Tibial artery (tissue), 4 donors: ENCODE measurements at regions of chr9 and their contacts with region 1.

Region 1: DNA sequence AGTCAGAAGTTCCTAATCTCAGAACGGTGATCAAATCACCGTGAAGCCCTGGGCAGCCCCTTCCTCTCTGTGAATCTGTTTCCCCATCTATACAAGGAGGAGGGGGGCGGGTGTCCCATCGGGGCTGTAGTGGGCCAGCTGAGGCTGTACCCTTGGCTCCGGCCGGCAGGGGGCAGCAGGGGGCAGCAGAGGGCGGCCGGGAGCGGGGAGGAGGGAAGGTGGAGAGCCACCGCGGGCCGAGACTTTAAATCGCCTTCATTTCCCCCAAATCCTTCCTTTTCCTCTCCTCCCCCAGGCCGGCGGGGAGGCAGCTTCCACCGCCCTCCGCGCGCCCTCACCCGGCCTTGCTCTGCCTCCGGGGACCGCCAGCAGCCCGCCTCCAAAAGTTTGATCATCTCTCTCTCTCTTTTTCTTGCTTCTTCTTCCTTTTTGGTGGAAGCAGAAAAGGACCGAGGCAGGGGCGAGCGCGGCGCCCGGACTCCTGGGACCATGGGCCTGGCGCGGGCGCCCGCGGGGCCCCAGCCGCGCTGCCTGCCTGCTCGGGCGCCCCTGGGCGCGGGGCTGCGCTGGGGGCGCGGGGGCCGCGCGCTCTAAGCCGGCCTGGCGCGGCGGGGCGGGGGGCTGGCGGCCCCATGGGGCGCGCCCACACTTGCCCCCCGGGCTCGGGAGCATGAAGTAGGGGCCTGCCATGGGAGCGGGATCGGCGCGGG is at the start of gene COL27A1:
- DNase-seq: peak; percentile 81 to 88
- H3K4me3 ChIP-seq: peak within 1 kb of the TSS; percentile 57 to 72
- H3K27ac ChIP-seq: peak within 1 kb of the TSS; percentile 79 to 88
- H3K4me1 ChIP-seq: peaks cover 0 to 42% (median 33%) of the 10 kb centered on the region in 4 donors
- H3K27me3 ChIP-seq: peaks cover 0 to 32% of the 10 kb centered on the region in 2 donors
- CTCF ChIP-seq: peak; percentile 96 to 98

Region 2: DNA sequence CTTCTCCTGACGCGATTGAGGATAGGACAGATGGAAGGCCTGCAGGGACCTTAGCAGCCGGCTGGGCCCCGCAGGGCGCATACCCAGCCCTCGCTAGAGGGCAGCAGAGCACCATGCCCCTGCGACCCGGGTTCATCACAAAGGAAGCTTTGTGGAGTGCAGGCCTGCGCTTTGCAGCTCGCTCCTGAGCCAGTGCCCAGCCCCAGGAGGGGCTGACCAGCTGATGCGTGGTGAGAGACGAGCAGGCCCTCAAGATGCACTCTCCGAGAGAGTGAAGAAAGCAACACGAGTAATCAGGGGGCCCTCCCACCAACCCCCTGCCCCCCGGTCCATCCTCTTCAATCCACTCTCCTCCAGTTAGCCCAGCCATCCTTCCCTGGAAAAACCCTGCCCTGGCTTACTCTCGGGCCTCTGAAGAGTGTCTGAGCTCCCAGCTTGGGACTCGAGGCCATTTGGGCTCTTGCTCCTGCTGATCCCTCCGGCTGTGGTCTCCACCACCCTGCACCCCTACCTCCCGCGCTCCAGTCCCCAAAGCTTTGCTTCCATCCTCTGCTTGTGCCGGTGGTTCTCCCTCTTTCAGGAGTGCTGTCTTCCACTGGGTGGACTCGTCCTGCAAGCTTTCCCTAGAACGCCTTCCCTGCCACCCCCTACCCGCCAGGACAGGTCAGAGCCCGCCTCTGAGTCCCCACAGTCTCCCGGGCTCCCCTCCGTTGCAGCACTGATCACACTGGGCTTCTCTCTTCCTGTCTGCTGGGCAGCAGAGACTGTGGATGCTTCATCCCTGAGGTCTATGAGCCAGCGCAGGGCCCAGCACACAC is 47.2 kb before region 1 on chr9:
- intact Hi-C with region 1: loop called (anchors 5 kb)
- DNase-seq: peak; percentile 57 to 81
- H3K4me3 ChIP-seq: no peak overlapping the region
- H3K27ac ChIP-seq: no peak overlapping the region
- H3K4me1 ChIP-seq: peaks cover 0 to 12% (median 10%) of the 10 kb centered on the region in 4 donors
- H3K27me3 ChIP-seq: no peaks in the 10 kb centered on the region
- CTCF ChIP-seq: peak; percentile 92 to 99

Region 3: DNA sequence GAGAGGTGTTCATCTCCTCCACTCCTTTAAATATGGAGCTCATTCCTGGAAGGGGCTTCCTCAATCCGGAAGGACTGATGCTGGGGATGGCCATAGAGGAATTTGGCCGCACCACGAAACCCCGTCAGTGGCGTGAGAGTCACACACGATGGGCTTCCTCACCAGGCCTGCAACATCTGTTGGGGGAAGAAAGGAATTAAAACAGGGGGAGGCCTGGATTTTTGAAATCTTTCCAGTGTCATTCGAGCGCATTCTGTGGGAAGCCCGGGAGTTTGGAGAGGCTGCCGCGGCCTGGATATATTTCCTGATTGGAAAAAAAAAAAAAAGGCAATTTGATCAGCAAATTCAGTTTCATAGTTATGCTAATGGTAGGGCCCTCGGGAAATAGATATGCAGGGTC is 91.1 kb after region 1 on chr9:
- intact Hi-C with region 1: loop called (anchors 5 kb)
- DNase-seq: no peak
- H3K4me3 ChIP-seq: no peak overlapping the region
- H3K27ac ChIP-seq: no peak overlapping the region
- H3K4me1 ChIP-seq: peaks cover 0 to 28% (median 17%) of the 10 kb centered on the region in 4 donors
- H3K27me3 ChIP-seq: no peaks in the 10 kb centered on the region
- CTCF ChIP-seq: no peak

Region 4: DNA sequence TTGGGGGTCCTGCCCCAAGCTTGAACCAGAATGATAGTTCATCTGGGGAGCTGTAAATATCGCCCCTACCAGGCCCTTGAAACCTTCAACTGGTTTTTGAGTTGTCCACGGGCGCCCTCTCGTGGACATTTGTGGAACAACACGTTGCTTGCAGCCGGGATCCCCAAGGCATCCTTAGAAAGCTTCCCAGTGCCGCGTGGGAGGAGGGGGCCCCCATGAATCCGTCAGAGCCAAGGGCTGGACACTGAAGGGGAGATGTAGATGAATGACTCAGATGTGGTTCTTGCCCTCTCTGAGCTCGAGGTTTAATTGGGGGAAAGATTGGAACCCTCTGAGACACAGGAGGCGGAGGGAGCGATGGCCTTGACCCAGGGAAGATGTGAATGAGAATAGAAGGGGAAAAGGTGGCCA is 135.7 kb after region 1 on chr9:
- intact Hi-C with region 1: loop called (anchors 2 kb)
- DNase-seq: peak; percentile 55 to 79
- H3K4me3 ChIP-seq: no peak overlapping the region
- H3K27ac ChIP-seq: no peak overlapping the region
- H3K4me1 ChIP-seq: peaks cover 0 to 12% (median 10%) of the 10 kb centered on the region in 4 donors
- H3K27me3 ChIP-seq: no peaks in the 10 kb centered on the region
- CTCF ChIP-seq: peak; percentile 93